Heart left ventricle (tissue), 16 donors: ENCODE measurements at regions of chr11 and their contacts with region 1.

Region 1: DNA sequence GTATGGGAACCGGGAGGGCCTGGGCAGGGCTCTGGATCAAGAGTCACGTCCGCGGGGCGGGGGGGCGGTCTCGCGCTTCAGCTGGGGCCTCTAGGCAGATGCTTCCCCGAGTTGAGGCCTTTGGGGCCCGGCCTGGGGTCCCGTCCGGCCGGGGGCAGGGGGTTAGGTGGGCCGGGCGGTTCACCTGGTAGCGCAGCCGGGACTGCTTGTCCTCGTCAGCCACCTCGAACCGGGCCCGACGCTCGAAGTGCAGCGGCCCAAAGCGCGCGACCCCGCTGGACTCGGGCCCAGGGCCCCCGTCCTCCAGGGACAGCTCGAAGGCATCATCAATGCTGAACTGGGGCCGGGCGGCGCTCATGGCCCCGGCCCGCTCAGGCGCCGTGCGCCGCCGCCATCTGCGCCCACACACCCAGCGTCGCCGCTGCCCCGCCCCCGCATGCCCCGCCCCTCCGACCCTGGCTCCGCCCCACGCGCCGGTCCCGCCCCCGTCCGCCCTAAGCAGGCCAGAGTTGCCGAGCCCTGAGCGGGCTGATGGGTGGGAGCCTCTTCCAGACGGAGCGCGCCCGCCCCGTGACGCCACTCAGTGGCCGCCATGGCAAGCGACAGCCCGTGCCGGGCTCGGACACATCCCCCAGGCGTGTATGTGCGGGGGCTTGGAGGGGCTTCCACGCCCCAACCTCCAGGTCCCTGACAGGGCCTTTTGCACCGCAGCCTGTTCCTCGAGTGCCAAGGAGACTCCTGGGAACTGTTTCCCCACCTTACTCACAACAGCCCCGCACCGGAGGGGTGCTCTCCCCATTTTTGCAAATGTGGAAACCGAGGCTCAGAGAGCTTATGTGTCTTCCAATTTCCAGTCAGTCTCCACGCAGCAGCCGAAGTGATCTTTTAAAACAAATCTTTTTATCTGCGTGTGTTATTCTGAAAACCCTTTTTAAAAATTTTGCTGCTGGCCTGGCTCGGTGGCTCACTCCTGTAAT is at the start of gene TMEM134:
- DNase-seq: peak; percentile 94 to 98 (median 95)
- ATAC-seq: peak; percentile 93 to 95 (median 94)
- H3K4me3 ChIP-seq: peak within 1 kb of the TSS; percentile 56 to 98 (median 85)
- H3K27ac ChIP-seq: peak within 1 kb of the TSS; percentile 72 to 94 (median 90)
- H3K4me1 ChIP-seq: peaks cover 0 to 40% (median 23%) of the 10 kb centered on the region in 12 donors
- H3K27me3 ChIP-seq: no peaks in the 10 kb centered on the region
- CTCF ChIP-seq: peak; percentile 31 to 66 (median 45)
- POLR2A ChIP-seq: peak in 1 of 2 donors; percentile 80
- total RNA-seq, gene TMEM134: 67.0 to 146 (median 77.2) TPM

Region 2: GRCh38 chr11:67401495-67402191 is 67.5 kb before region 1 on chr11 and contains the start of gene PPP1CA:
- intact Hi-C with region 1: loop called in 9 of 10 experiments (anchors 1 to 10 kb)
- DNase-seq: peak; percentile 93 to 95 (median 93)
- ATAC-seq: peak; percentile 70 to 88 (median 86)
- H3K4me3 ChIP-seq: peak within 1 kb of the TSS; percentile 74 to 100 (median 86)
- H3K27ac ChIP-seq: peak within 1 kb of the TSS; percentile 91 to 99 (median 97)
- H3K4me1 ChIP-seq: peaks cover 0 to 62% (median 34%) of the 10 kb centered on the region in 12 donors
- H3K27me3 ChIP-seq: no peaks in the 10 kb centered on the region
- CTCF ChIP-seq: peak in 10 of 12 donors; percentile 20 to 88 (median 62)
- POLR2A ChIP-seq: peak; percentile 33 to 79
- total RNA-seq, gene PPP1CA: 90.3 to 151 (median 105) TPM

Region 3: GRCh38 chr11:67428052-67428914 is 40.8 kb before region 1 on chr11 and contains the start of gene RPS6KB2:
- intact Hi-C with region 1: loop called in 2 of 10 experiments (anchors 1 to 2 kb)
- DNase-seq: peak; percentile 98 to 99 (median 99)
- ATAC-seq: peak; percentile 90 to 96 (median 94)
- H3K4me3 ChIP-seq: peak within 1 kb of the TSS; percentile 58 to 94 (median 80)
- H3K27ac ChIP-seq: peak within 1 kb of the TSS; percentile 76 to 96 (median 88)
- H3K4me1 ChIP-seq: peaks cover 7 to 23% (median 14%) of the 10 kb centered on the region in 12 donors
- H3K27me3 ChIP-seq: no peaks in the 10 kb centered on the region
- CTCF ChIP-seq: peak in 1 of 12 donors; percentile 15
- POLR2A ChIP-seq: peak; percentile 54 to 93
- total RNA-seq, gene RPS6KB2: 19.3 to 32.8 (median 25.2) TPM

Region 4: GRCh38 chr11:67442504-67443405 is 26.4 kb before region 1 on chr11:
- intact Hi-C with region 1: loop called in 1 of 10 experiments (anchors 2 kb)
- DNase-seq: peak in 1 of 5 donors; percentile 21
- ATAC-seq: peak in 1 of 4 donors; percentile 4
- H3K4me3 ChIP-seq: peak overlapping the region; percentile 62 to 97 (median 84)
- H3K27ac ChIP-seq: peak overlapping the region; percentile 83 to 99 (median 96)
- H3K4me1 ChIP-seq: peaks cover 0 to 57% (median 20%) of the 10 kb centered on the region in 12 donors
- H3K27me3 ChIP-seq: no peaks in the 10 kb centered on the region
- CTCF ChIP-seq: no peak
- POLR2A ChIP-seq: no peak